Activated CD4-positive, alpha-beta memory T cell treated with anti-CD3 and anti-CD28 coated beads for 36 hours (primary cell): ENCODE measurements at regions of chr12 and their contacts with region 1.

Region 1: DNA sequence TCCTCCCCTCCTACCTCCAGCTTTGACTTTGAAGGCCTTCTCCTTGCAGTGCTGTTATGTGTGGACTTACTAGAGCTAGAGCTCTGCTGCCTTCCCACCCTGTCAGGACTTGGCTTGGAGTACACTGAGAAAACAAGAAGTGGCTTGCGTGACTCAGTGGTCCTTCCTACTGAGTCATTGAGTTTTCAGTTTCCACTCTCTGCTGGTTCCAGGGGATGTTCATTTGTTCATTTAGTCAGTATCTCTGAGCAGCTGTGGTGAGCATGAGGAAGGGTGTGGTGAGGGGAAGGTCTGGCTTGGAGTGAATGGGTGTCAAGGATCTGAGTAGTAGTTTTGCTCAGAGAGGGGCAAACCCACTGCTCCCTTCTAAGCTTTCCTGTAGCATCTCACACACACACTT is 17.2 kb upstream of the ELK3 start:
- DNase-seq: peak; percentile 90
- H3K4me3 Mint-ChIP-seq: peak overlapping the region; percentile 10
- H3K27ac Mint-ChIP-seq: peak overlapping the region; percentile 83
- H3K4me1 Mint-ChIP-seq: peaks cover 24% of the 10 kb centered on the region
- H3K27me3 Mint-ChIP-seq: no peaks in the 10 kb centered on the region

Region 2: DNA sequence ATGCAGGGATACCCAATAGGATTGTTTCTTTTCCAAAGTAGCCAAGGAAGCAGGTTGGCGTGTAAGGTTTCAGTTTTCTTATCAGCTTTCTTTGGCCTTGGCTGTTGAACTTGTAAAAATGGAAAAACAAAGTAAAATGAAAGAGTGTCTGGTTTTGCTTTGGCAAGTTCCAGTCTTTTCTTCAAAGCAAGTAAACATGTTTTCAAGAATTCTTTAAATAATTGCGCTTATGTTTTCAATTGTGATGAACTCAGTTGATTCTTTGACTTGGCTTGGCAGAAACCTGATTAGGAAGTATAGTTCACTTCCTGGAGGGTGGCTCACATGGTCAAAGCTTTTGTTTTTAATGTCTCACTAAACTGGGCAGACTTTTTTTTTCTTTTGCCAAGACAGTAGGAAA is 513.5 kb before region 1 on chr12:
- CTCF ChIA-PET with region 1: no interaction called
- POLR2A ChIA-PET with region 1: no interaction called
- intact Hi-C with region 1: no loop called
- DNase-seq: no peak
- H3K4me3 Mint-ChIP-seq: no peak overlapping the region
- H3K27ac Mint-ChIP-seq: no peak overlapping the region
- H3K4me1 Mint-ChIP-seq: no peaks in the 10 kb centered on the region
- H3K27me3 Mint-ChIP-seq: peaks cover 4% of the 10 kb centered on the region

Region 3: GRCh38 chr12:96120359-96121100 is 56.5 kb before region 1 on chr12:
- CTCF ChIA-PET with region 1: interaction called, 3 read pairs
- POLR2A ChIA-PET with region 1: no interaction called
- intact Hi-C with region 1: loop called (anchors 1 kb)
- DNase-seq: no peak
- H3K4me3 Mint-ChIP-seq: no peak overlapping the region
- H3K27ac Mint-ChIP-seq: no peak overlapping the region
- H3K4me1 Mint-ChIP-seq: peaks cover 8% of the 10 kb centered on the region
- H3K27me3 Mint-ChIP-seq: no peaks in the 10 kb centered on the region

Region 4: DNA sequence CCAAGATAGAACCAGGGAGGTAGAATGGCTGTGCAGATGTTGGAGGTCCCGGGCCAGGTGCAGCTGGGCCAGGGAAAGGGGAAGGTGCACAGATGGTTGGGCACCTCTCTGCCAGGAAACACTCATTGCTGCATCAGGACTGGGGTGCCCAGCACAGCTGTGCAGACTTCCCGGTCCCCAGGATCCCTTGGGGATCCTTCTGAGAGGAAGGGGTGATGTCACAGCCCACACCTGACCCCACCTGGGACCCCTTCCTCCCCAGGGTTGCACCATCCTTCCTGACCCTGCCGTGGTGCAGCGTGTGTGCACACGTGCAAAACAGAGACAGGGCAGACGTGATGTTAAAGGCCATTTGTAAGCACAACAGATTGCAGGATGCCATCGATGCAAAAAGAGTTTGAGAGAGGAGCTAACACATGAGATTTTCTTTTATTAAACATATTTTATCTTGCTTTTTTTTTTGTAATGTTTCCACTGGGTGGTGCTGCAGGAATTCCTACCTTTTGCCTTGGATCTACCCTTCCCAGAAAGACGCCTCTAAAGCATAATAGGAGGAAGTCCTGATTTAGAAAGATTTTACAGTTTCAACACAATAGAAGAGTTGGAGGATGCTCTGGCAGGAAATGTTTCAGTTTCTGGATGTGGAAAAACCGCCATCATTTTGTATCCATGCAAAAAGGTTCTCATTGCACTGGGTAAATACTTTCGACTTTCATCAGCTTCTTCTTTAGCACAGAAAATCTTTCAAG is 32.0 kb after region 1 on chr12:
- CTCF ChIA-PET with region 1: interaction called, 10 read pairs
- POLR2A ChIA-PET with region 1: interaction called, 11 read pairs
- intact Hi-C with region 1: no loop called
- DNase-seq: peak; percentile 15
- H3K4me3 Mint-ChIP-seq: peak overlapping the region; percentile 30
- H3K27ac Mint-ChIP-seq: peak overlapping the region; percentile 93
- H3K4me1 Mint-ChIP-seq: peaks cover 95% of the 10 kb centered on the region
- H3K27me3 Mint-ChIP-seq: no peaks in the 10 kb centered on the region

Region 5: GRCh38 chr12:96427269-96427729 is 250.3 kb after region 1 on chr12:
- CTCF ChIA-PET with region 1: no interaction called
- POLR2A ChIA-PET with region 1: no interaction called
- intact Hi-C with region 1: loop called (anchors 1 kb)
- DNase-seq: peak; percentile 76
- H3K4me3 Mint-ChIP-seq: peak overlapping the region; percentile 17
- H3K27ac Mint-ChIP-seq: peak overlapping the region; percentile 79
- H3K4me1 Mint-ChIP-seq: peaks cover 47% of the 10 kb centered on the region
- H3K27me3 Mint-ChIP-seq: no peaks in the 10 kb centered on the region

Region 6: DNA sequence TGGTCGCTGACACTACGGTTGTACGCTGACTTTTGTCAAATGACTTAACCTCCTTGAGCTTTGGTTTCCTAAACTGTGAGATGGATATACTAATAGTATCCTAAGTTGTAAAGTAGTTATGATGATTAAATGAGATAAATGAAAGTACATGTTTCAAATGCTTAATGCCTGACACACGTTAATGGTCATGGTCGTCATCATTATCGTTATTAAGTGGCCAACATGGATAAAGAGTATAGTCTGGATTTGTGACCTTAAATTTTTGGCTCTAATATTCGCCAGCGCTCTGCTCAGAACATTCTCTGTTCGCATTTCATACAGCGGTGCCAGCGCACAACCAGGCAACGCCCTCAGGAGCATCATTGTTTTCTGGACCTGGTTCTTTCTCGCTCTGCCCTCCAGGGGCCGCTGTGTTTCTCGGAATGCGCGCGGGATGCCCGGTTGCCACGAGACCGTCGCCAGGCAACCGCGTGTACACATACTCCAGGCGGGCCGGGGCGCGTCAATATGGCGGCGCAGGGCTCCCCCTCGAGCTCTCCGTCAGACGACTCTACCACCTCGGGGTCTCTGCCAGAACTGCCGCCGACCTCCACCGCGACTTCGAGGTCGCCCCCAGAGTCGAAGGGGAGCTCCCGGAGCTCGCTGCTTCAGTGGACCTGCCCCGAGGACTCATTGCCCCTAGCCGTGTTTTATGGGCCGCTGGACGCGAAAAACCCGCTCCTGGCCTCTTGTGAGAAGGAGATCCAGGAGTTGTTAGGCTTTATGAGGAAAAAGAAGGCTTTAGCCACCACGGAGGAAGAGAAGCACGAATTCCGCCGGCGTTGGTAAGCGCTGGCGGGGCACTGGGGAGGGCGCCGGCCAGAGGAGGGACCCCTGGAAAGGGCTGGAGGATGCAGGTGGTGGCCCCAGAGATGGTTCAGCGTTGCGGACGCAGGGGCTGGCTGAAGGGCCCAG is 312.4 kb after region 1 on chr12 and contains the start of gene CFAP54:
- CTCF ChIA-PET with region 1: no interaction called
- POLR2A ChIA-PET with region 1: no interaction called
- intact Hi-C with region 1: loop called (anchors 1 kb)
- DNase-seq: peak; percentile 96
- H3K4me3 Mint-ChIP-seq: peak within 1 kb of the TSS; percentile 83
- H3K27ac Mint-ChIP-seq: peak within 1 kb of the TSS; percentile 16
- H3K4me1 Mint-ChIP-seq: peaks cover 36% of the 10 kb centered on the region
- H3K27me3 Mint-ChIP-seq: no peaks in the 10 kb centered on the region
- total RNA-seq, gene CFAP54: 0.31 to 0.33 TPM